CD8-positive, alpha-beta memory T cell (primary cell): ENCODE measurements at regions of chr20 and their contacts with region 1.

Region 1: DNA sequence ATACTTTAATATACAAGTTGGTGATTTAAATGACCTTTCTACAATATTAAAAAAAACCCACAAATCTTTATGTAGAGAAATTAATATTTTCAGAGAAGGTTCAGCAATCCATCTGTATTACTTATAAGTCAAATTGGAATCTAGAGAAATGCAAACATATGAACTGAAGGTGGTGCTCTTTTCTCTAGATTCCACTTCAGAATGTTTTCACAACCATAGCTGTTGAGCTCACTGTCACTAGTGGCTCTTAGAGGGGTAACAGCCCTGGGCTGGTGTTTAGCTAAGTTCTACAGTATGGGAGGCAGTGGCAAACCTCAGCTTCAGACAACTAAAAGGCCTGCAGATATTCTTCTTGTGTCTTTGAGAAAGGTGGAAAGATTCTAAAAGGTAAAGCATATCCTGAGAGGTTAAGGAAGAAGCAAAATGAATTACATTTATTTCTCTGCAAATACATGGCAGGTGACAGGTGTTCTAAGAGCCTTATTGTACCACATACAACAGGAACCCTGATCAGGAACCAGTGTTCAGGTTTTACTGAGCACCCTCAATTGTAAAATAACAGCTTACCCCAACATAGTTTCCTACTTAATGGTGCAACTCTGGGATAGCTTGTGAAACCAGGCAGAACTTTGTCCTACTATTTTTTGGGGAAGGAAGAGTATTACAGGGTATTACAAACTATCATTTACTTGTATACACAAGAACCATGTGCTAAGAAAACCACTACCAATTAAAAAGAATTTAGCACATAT is 56.6 kb upstream of the SAMHD1 start:
- DNase-seq: peak in 4 of 5 donors; percentile 7 to 61 (median 54)
- H3K4me3 ChIP-seq: no peak overlapping the region
- H3K4me3 Mint-ChIP-seq: peak overlapping the region in 2 of 7 donors; percentile 3 to 49
- H3K27ac ChIP-seq: no peak overlapping the region
- H3K27ac Mint-ChIP-seq: peak overlapping the region; percentile 66 to 97 (median 86)
- H3K4me1 ChIP-seq: peaks cover 11% of the 10 kb centered on the region
- H3K4me1 Mint-ChIP-seq: peaks cover 16 to 23% (median 22%) of the 10 kb centered on the region in 3 donors
- H3K27me3 ChIP-seq: no peaks in the 10 kb centered on the region
- H3K27me3 Mint-ChIP-seq: no peaks in the 10 kb centered on the region

Region 2: DNA sequence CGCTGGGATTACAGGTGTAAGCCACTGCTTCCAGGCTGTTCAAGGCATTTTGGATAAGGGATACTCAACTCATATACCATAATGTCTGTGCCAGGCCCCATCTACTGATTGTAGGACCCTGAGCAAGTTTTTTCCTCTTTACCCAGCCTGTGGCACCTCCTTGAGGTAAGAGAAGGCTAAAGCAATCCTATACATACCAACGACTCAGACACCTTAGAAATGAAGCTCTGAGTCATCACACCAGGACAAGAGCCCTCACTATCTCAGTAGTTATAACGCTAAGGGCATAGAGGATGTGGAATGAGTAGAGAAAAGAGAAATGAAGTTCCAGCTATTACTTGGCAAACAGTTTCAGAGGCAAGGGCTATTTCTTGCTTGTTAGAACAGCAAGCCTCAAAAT is 279.1 kb before region 1 on chr20:
- CTCF ChIA-PET with region 1: no interaction called
- POLR2A ChIA-PET with region 1: no interaction called
- DNase-seq: no peak
- H3K4me3 ChIP-seq: no peak overlapping the region
- H3K4me3 Mint-ChIP-seq: no peak overlapping the region
- H3K27ac ChIP-seq: no peak overlapping the region
- H3K27ac Mint-ChIP-seq: peak overlapping the region in 2 of 8 donors; percentile 7 to 23
- H3K4me1 ChIP-seq: peaks cover 7% of the 10 kb centered on the region
- H3K4me1 Mint-ChIP-seq: peaks cover 15 to 31% (median 17%) of the 10 kb centered on the region in 3 donors
- H3K27me3 ChIP-seq: no peaks in the 10 kb centered on the region
- H3K27me3 Mint-ChIP-seq: no peaks in the 10 kb centered on the region

Region 3: GRCh38 chr20:36919715-36920333 is 88.2 kb before region 1 on chr20:
- CTCF ChIA-PET with region 1: interaction called, 11 read pairs
- POLR2A ChIA-PET with region 1: no interaction called
- DNase-seq: peak in 3 of 5 donors; percentile 6 to 57 (median 40)
- H3K4me3 ChIP-seq: no peak overlapping the region
- H3K4me3 Mint-ChIP-seq: no peak overlapping the region
- H3K27ac ChIP-seq: no peak overlapping the region
- H3K27ac Mint-ChIP-seq: peak overlapping the region in 6 of 8 donors; percentile 13 to 92 (median 88)
- H3K4me1 ChIP-seq: peaks cover 24% of the 10 kb centered on the region
- H3K4me1 Mint-ChIP-seq: peaks cover 11 to 25% (median 22%) of the 10 kb centered on the region in 3 donors
- H3K27me3 ChIP-seq: no peaks in the 10 kb centered on the region
- H3K27me3 Mint-ChIP-seq: no peaks in the 10 kb centered on the region

Region 4: GRCh38 chr20:37042986-37043972 is 35.2 kb after region 1 on chr20:
- CTCF ChIA-PET with region 1: interaction called, 10 read pairs
- POLR2A ChIA-PET with region 1: interaction called, 8 read pairs
- DNase-seq: peak in 4 of 5 donors; percentile 3 to 57 (median 46)
- H3K4me3 ChIP-seq: peak overlapping the region; percentile 41
- H3K4me3 Mint-ChIP-seq: peak overlapping the region; percentile 86 to 95 (median 88)
- H3K27ac ChIP-seq: peak overlapping the region; percentile 57
- H3K27ac Mint-ChIP-seq: peak overlapping the region; percentile 75 to 99 (median 94)
- H3K4me1 ChIP-seq: peaks cover 20% of the 10 kb centered on the region
- H3K4me1 Mint-ChIP-seq: peaks cover 24 to 39% (median 37%) of the 10 kb centered on the region in 3 donors
- H3K27me3 ChIP-seq: no peaks in the 10 kb centered on the region
- H3K27me3 Mint-ChIP-seq: no peaks in the 10 kb centered on the region

Region 5: DNA sequence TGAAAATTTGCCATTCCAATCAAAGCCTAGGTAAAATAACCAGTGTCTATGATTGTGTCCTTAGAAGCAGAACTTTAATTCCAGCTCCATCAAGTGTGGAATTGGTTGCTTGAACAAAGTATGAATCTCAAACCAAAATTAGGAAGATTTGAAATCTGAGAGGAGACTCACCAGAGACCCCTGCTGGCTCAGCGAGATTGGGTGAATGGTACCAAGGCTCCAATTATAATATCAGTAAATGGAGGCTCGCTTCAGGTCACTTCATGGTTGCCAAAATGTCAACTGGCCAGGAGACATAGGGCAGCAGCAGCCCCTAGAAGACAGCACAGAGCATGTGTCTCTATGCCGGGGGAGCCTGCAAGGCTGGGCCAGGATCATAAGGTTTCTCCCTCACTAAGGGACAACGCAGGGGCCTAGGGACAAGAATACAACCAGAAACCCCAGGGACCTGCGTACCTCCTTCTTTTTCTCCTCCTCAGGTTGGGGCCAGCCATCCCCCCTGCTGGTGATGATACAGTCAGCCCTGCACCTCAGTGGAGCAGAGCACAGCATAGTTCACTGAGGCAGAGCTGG is 73.7 kb after region 1 on chr20:
- CTCF ChIA-PET with region 1: interaction called, 98 read pairs
- POLR2A ChIA-PET with region 1: interaction called, 5 read pairs
- DNase-seq: peak in 4 of 5 donors; percentile 22 to 51 (median 34)
- H3K4me3 ChIP-seq: no peak overlapping the region
- H3K4me3 Mint-ChIP-seq: no peak overlapping the region
- H3K27ac ChIP-seq: no peak overlapping the region
- H3K27ac Mint-ChIP-seq: peak overlapping the region; percentile 32 to 84 (median 66)
- H3K4me1 ChIP-seq: peaks cover 12% of the 10 kb centered on the region
- H3K4me1 Mint-ChIP-seq: peaks cover 24 to 46% (median 35%) of the 10 kb centered on the region in 3 donors
- H3K27me3 ChIP-seq: no peaks in the 10 kb centered on the region
- H3K27me3 Mint-ChIP-seq: no peaks in the 10 kb centered on the region

Region 6: DNA sequence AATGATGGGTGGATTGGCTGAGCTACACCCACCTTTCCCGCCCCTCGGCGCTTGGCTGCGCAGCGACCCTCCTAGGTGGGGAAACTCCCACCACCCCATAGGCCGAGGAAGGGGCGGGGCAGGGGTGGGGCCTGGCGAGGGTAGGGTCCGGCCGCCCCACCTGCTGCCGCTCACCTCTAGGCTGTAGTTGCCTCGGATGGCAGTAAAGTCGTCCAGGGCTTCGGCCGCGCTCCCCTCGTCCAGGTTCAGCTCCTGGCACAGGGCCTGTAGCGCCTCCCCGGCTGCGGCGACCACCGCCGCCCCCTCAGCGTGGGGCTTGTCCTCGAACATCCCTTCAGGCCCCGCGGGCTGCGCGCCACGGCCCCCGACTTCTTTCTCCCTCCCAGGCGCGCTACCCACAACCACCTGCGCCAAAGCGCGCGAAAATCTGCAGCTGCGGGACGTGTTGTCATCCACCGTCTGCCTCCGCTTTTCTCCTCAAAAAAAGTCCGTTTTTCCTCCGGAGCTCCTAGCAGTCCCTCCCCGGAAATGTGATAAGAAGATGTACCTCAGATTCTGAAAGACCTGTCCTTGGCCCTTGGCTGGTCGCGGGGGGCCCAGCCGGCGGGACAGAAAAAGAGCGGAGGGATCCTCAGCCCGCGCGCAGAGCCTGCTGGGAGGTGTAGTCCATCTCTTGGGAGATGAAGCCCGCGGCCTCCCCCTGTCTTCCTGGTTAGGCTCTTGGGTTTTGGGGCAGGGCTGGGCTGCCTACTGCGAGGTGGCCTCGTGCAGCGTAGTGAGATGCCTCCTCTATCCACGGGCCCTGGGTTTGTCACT is 87.7 kb after region 1 on chr20 and contains the start of gene RBL1:
- CTCF ChIA-PET with region 1: interaction called, 11 read pairs
- POLR2A ChIA-PET with region 1: interaction called, 3 read pairs
- DNase-seq: peak; percentile 77 to 91 (median 88)
- H3K4me3 ChIP-seq: peak within 1 kb of the TSS; percentile 72
- H3K4me3 Mint-ChIP-seq: peak within 1 kb of the TSS; percentile 97 to 100 (median 98)
- H3K27ac ChIP-seq: peak within 1 kb of the TSS; percentile 76
- H3K27ac Mint-ChIP-seq: peak within 1 kb of the TSS; percentile 98 to 99 (median 99)
- H3K4me1 ChIP-seq: peaks cover 20% of the 10 kb centered on the region
- H3K4me1 Mint-ChIP-seq: peaks cover 29 to 46% (median 46%) of the 10 kb centered on the region in 3 donors
- H3K27me3 ChIP-seq: no peaks in the 10 kb centered on the region
- H3K27me3 Mint-ChIP-seq: peaks cover 0 to 5% of the 10 kb centered on the region in 2 donors
- total RNA-seq, gene RBL1: 44.0 to 45.0 TPM

Region 7: DNA sequence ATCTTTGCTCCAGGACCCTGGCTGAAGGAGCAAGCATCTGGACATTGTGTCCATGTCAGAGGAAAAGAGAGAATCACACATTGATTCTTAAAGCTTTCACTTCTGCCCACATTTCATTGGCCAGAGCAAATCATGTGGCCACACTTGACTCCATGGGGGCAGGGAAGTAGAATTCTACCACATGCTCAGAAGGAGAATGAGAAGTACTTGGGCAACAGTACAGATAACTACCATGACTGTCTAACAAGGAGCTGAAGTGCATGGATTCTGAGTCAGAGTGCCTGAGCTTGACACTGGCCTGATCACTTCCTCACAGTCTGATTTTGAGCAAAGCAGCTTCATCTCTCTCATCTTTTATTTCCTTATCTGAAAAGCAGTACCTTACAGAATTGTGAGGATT is 215.0 kb after region 1 on chr20:
- CTCF ChIA-PET with region 1: no interaction called
- POLR2A ChIA-PET with region 1: no interaction called
- DNase-seq: no peak
- H3K4me3 ChIP-seq: no peak overlapping the region
- H3K4me3 Mint-ChIP-seq: no peak overlapping the region
- H3K27ac ChIP-seq: no peak overlapping the region
- H3K27ac Mint-ChIP-seq: peak overlapping the region in 1 of 8 donors; percentile 18
- H3K4me1 ChIP-seq: no peaks in the 10 kb centered on the region
- H3K4me1 Mint-ChIP-seq: peaks cover 1 to 5% (median 4%) of the 10 kb centered on the region in 3 donors
- H3K27me3 ChIP-seq: no peaks in the 10 kb centered on the region
- H3K27me3 Mint-ChIP-seq: no peaks in the 10 kb centered on the region